ENCODE measurements at regions of chr10 and their contacts with region 1.

Region 1: DNA sequence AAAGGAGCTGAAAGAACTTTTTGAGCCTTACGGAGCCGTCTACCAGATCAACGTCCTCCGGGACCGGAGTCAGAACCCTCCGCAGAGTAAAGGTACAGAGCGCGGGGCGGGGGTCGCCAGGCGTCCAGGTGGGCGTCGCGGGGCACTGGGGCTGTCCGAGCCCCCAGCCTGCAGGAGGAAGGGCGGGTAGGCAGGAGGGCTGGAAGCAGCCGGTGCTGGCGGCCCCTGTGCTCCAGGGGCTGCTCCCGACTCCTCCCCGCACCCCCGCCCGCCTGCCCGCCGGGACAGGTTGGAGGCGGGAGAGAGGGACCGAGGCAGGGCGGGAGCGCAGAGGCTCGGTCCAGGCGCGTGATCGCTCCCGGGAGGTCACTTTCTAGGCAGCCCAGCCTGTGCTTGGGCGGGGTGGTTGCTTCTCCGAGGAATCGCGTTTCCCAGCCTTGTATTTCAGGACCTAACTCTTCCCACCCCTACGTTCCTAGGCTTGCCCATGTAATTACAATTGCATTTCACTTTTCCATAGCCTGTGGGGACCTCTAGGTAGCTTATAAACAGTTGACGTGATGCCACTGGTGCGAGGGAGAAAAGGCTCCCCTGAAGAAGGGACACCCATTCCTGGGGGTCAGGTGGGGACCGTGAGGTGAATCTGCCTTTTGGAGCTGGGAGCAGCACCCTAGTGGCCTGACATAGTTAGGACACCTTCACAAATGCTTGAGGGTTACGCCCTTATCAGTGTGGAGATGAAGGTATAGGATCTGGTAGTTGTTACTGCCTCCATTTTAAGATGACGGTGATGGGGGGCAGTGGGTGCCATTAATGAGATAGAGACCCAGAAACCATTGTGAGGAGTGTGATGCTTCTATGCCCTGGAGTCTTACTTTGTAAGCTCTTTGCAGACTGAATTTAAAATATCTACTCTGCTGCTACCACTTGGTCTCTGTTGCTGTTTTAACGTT is 148.2 kb downstream of the CELF2 start:
- DNase-seq: peak; percentile 66
- ATAC-seq: peak; percentile 87
- H3K4me3 Mint-ChIP-seq: peak overlapping the region; percentile 90
- H3K27ac Mint-ChIP-seq: no peak overlapping the region
- H3K4me1 Mint-ChIP-seq: peaks cover 32% of the 10 kb centered on the region
- H3K27me3 Mint-ChIP-seq: peaks cover 5% of the 10 kb centered on the region
- CTCF ChIP-seq: peak; percentile 54

Region 2: GRCh38 chr10:11057994-11058393 is 107.9 kb before region 1 on chr10:
- CTCF ChIA-PET with region 1: no interaction called
- POLR2A ChIA-PET with region 1: interaction called, 13 read pairs
- DNase-seq: no peak
- ATAC-seq: no peak
- H3K4me3 Mint-ChIP-seq: no peak overlapping the region
- H3K27ac Mint-ChIP-seq: no peak overlapping the region
- H3K4me1 Mint-ChIP-seq: peaks cover 28% of the 10 kb centered on the region
- H3K27me3 Mint-ChIP-seq: no peaks in the 10 kb centered on the region
- CTCF ChIP-seq: no peak

Region 3: DNA sequence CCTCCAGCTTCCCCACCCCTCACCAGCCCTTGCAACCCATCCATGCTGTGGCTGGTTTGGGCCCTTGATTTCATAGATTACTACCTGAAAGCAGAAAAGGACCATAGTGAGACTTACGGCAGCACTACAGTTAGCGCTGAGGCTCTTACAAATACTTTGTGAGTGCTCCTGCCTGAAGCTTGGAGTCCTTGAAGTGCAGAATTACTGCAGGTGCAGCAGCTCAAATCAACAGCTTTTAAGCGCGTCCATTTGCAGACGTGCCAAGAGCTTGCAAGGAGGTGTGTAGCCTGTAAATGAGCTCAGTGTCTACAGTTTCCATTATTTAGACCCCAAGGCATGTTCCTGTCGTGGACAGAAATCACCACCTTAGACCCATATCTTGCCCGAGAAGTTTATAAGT is 45.2 kb before region 1 on chr10:
- CTCF ChIA-PET with region 1: no interaction called
- POLR2A ChIA-PET with region 1: no interaction called
- DNase-seq: no peak
- ATAC-seq: no peak
- H3K4me3 Mint-ChIP-seq: no peak overlapping the region
- H3K27ac Mint-ChIP-seq: no peak overlapping the region
- H3K4me1 Mint-ChIP-seq: peaks cover 26% of the 10 kb centered on the region
- H3K27me3 Mint-ChIP-seq: no peaks in the 10 kb centered on the region
- CTCF ChIP-seq: no peak

Region 4: DNA sequence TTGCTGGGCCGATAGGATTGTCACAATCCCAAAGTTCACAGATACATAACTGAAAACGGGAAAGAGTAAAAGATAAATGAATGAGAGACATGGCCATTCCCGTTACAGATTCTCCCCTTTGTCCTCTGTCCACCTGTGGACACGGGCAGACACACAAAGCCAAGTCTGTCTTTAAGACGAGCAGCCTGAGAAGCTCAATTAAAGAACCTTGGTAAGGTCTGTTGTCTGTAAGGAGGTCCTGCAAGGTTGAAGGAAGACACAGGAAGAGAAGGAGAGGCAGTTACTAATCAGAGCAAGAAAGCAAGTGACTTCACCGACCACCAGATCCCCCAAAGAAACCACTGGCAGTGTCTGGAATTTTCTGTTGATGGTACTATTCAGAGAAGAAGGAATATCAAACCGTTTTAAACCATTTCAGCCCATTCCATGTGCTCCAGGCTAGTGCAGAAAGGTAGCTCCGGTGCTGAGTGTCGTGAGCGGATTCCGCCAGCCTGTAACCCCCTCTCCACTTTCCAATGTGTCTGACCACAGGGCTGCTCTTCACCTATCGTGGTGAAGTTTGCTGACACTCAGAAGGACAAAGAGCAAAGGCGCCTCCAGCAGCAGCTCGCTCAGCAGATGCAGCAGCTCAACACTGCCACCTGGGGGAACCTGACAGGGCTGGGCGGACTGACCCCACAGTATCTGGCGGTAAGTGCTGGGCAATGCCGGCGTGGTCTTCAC is 104.4 kb after region 1 on chr10:
- CTCF ChIA-PET with region 1: interaction called, 13 read pairs
- POLR2A ChIA-PET with region 1: no interaction called
- DNase-seq: peak; percentile 94
- ATAC-seq: peak; percentile 98
- H3K4me3 Mint-ChIP-seq: no peak overlapping the region
- H3K27ac Mint-ChIP-seq: no peak overlapping the region; the same call in 1 of the 2 replicates
- H3K4me1 Mint-ChIP-seq: peaks cover 37% of the 10 kb centered on the region
- H3K27me3 Mint-ChIP-seq: no peaks in the 10 kb centered on the region
- CTCF ChIP-seq: peak; percentile 87